ENCODE measurements at regions of chr10 and their contacts with region 1.

Region 1: GRCh38 chr10:67764012-67764822 is 68.2 kb upstream of the CTNNA3 start:
- DNase-seq: peak; percentile 96
- H3K4me3 Mint-ChIP-seq: peak overlapping the region; percentile 90
- H3K27ac Mint-ChIP-seq: peak overlapping the region; percentile 98
- H3K4me1 Mint-ChIP-seq: peaks cover 19% of the 10 kb centered on the region
- H3K27me3 Mint-ChIP-seq: peaks cover 2% of the 10 kb centered on the region

Region 2: GRCh38 chr10:67015225-67015624 is 749.0 kb before region 1 on chr10:
- intact Hi-C with region 1: no loop called
- DNase-seq: no peak
- H3K4me3 Mint-ChIP-seq: no peak overlapping the region
- H3K27ac Mint-ChIP-seq: peak overlapping the region; percentile 46
- H3K4me1 Mint-ChIP-seq: peaks cover 27% of the 10 kb centered on the region
- H3K27me3 Mint-ChIP-seq: no peaks in the 10 kb centered on the region

Region 3: DNA sequence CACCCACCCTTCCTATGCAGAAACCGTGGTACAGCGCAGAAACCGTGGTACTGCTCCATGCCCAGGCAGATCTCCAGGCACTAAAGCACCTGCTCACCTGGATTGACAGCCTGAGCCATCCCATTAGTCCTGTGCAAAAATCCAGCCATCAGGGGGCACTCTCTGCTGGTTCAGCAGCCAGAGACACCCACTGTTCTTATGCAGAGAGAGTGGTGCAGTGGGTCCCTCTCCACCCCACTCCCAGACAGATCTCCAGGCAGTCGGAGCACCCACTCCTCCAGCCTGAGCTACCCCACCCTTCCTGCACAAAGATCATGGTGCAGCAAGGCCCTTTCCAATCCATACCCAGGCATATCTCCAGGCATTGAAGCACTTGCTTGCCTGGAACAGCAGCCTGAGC is 288.0 kb before region 1 on chr10:
- intact Hi-C with region 1: no loop called
- DNase-seq: no peak
- H3K4me3 Mint-ChIP-seq: no peak overlapping the region
- H3K27ac Mint-ChIP-seq: no peak overlapping the region
- H3K4me1 Mint-ChIP-seq: no peaks in the 10 kb centered on the region
- H3K27me3 Mint-ChIP-seq: no peaks in the 10 kb centered on the region

Region 4: GRCh38 chr10:67612577-67613537 is 151.4 kb before region 1 on chr10:
- intact Hi-C with region 1: loop called (anchors 1 kb)
- DNase-seq: peak; percentile 77
- H3K4me3 Mint-ChIP-seq: peak overlapping the region; percentile 38
- H3K27ac Mint-ChIP-seq: peak overlapping the region; percentile 56
- H3K4me1 Mint-ChIP-seq: peaks cover 27% of the 10 kb centered on the region
- H3K27me3 Mint-ChIP-seq: peaks cover 40% of the 10 kb centered on the region

Region 5: GRCh38 chr10:67849331-67850011 is 85.3 kb after region 1 on chr10:
- intact Hi-C with region 1: loop called (anchors 1 kb)
- DNase-seq: peak; percentile 90
- H3K4me3 Mint-ChIP-seq: peak overlapping the region; percentile 92
- H3K27ac Mint-ChIP-seq: peak overlapping the region; percentile 94
- H3K4me1 Mint-ChIP-seq: peaks cover 8% of the 10 kb centered on the region
- H3K27me3 Mint-ChIP-seq: no peaks in the 10 kb centered on the region

Region 6: GRCh38 chr10:67884313-67884841 is 120.2 kb after region 1 on chr10 and contains the start of gene SIRT1:
- intact Hi-C with region 1: loop called (anchors 1 kb)
- DNase-seq: peak; percentile 93
- H3K4me3 Mint-ChIP-seq: peak within 1 kb of the TSS; percentile 91
- H3K27ac Mint-ChIP-seq: peak within 1 kb of the TSS; percentile 97
- H3K4me1 Mint-ChIP-seq: peaks cover 19% of the 10 kb centered on the region
- H3K27me3 Mint-ChIP-seq: peaks cover 2% of the 10 kb centered on the region
- total RNA-seq, gene SIRT1: 25.3 and 25.6 TPM in 2 replicates